Activated naive CD4-positive, alpha-beta T cell treated with anti-CD3 and anti-CD28 coated beads, Interleukin-2, amount 10 ng/mL, durations not matched to agents 7 days and 5 days (primary cell): ENCODE measurements at regions of chr1 and their contacts with region 1.

Region 1: GRCh38 chr1:35715568-35716002 is 3.1 kb downstream of the C1orf216 start:
- DNase-seq: peak; percentile 87
- H3K4me3 Mint-ChIP-seq: no peak overlapping the region
- H3K27ac Mint-ChIP-seq: no peak overlapping the region
- H3K4me1 Mint-ChIP-seq: peaks cover 31% of the 10 kb centered on the region
- H3K27me3 Mint-ChIP-seq: peaks cover 3% of the 10 kb centered on the region

Region 2: DNA sequence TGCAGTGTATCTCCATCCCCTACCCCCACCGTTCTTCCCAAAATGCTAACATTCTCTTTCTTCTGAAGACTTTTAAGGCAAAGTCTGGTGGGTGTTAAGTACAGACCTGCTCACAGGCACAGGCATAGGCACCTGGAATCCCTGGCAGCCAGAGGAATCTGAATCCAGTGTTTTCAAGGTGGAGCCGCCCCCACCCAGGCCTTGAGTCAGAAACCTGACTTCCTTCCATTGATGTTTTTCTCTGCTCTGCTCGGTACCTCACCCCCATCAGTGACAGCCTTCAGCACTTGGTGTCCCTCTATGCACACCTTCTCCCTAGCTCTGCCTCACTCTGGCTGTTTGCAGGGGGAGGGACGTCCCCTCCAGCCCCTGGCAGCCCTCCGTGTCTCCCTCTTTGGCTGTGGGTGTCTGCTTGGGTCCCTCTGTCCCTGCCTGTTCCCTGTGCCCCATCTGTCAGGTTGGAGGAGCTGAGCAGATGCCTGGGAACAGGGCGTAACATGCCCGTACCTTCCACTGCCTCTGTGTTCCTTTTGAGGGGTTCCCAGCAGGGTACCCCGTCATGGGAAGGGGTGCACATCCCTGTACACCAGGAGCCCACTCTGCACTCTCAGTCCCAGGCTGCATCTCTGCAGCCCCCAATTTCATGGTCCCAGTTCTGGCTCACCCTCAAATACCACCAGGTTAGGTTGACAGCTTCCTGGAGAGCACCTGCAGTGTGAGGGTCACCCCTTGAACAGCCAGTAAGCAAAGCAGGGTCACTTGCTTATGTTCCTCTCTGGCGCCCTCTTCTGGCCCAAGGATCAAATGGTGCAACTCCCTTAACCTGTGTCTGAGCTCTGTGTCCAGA is 151.3 kb before region 1 on chr1:
- CTCF ChIA-PET with region 1: interaction called, 78 read pairs
- DNase-seq: peak; percentile 91
- H3K4me3 Mint-ChIP-seq: no peak overlapping the region
- H3K27ac Mint-ChIP-seq: no peak overlapping the region
- H3K4me1 Mint-ChIP-seq: peaks cover 16% of the 10 kb centered on the region
- H3K27me3 Mint-ChIP-seq: no peaks in the 10 kb centered on the region

Region 3: DNA sequence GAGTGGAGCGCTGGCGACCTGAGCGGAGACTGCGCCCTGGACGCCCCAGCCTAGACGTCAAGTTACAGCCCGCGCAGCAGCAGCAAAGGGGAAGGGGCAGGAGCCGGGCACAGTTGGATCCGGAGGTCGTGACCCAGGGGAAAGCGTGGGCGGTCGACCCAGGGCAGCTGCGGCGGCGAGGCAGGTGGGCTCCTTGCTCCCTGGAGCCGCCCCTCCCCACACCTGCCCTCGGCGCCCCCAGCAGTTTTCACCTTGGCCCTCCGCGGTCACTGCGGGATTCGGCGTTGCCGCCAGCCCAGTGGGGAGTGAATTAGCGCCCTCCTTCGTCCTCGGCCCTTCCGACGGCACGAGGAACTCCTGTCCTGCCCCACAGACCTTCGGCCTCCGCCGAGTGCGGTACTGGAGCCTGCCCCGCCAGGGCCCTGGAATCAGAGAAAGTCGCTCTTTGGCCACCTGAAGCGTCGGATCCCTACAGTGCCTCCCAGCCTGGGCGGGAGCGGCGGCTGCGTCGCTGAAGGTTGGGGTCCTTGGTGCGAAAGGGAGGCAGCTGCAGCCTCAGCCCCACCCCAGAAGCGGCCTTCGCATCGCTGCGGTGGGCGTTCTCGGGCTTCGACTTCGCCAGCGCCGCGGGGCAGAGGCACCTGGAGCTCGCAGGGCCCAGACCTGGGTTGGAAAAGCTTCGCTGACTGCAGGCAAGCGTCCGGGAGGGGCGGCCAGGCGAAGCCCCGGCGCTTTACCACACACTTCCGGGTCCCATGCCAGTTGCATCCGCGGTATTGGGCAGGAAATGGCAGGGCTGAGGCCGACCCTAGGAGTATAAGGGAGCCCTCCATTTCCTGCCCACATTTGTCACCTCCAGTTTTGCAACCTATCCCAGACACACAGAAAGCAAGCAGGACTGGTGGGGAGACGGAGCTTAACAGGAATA is 138.2 kb before region 1 on chr1:
- CTCF ChIA-PET with region 1: interaction called, 40 read pairs
- DNase-seq: peak; percentile 84
- H3K4me3 Mint-ChIP-seq: peak overlapping the region; percentile 68
- H3K27ac Mint-ChIP-seq: peak overlapping the region; percentile 62
- H3K4me1 Mint-ChIP-seq: peaks cover 28% of the 10 kb centered on the region
- H3K27me3 Mint-ChIP-seq: peaks cover 63% of the 10 kb centered on the region

Region 4: DNA sequence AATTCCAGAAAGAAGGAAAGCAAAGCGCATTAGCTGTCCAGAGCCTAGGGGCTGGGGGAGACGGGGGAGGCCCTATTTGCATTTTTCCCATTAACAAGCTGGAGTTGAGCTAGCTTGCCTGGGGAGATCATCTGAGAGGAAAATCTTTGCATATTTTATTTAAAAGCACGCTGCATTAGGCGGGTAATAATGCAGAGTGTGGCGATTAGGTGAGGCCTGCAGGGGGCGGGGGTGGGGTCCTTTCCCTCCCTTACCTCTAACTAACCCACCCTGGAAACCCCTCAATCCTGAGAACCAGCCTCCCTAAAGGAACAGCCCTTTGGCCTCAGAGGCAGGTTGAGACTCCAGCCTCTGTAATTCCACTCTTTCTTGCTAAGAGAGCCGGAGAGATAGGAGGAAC is 13.1 kb before region 1 on chr1:
- CTCF ChIA-PET with region 1: interaction called, 33 read pairs
- DNase-seq: no peak
- H3K4me3 Mint-ChIP-seq: no peak overlapping the region
- H3K27ac Mint-ChIP-seq: no peak overlapping the region
- H3K4me1 Mint-ChIP-seq: peaks cover 8% of the 10 kb centered on the region
- H3K27me3 Mint-ChIP-seq: peaks cover 87% of the 10 kb centered on the region

Region 5: GRCh38 chr1:35762141-35762540 is 46.6 kb after region 1 on chr1:
- CTCF ChIA-PET with region 1: no interaction called
- DNase-seq: no peak
- H3K4me3 Mint-ChIP-seq: no peak overlapping the region
- H3K27ac Mint-ChIP-seq: no peak overlapping the region
- H3K4me1 Mint-ChIP-seq: peaks cover 30% of the 10 kb centered on the region
- H3K27me3 Mint-ChIP-seq: no peaks in the 10 kb centered on the region

Region 6: GRCh38 chr1:35795295-35795694 is 79.7 kb after region 1 on chr1:
- CTCF ChIA-PET with region 1: no interaction called
- DNase-seq: no peak
- H3K4me3 Mint-ChIP-seq: no peak overlapping the region
- H3K27ac Mint-ChIP-seq: no peak overlapping the region
- H3K4me1 Mint-ChIP-seq: peaks cover 2% of the 10 kb centered on the region
- H3K27me3 Mint-ChIP-seq: peaks cover 4% of the 10 kb centered on the region

Region 7: GRCh38 chr1:35807614-35808449 is 92.2 kb after region 1 on chr1 and contains the start of gene AGO4:
- CTCF ChIA-PET with region 1: no interaction called
- DNase-seq: peak; percentile 52
- H3K4me3 Mint-ChIP-seq: peak within 1 kb of the TSS; percentile 84
- H3K27ac Mint-ChIP-seq: peak within 1 kb of the TSS; percentile 77
- H3K4me1 Mint-ChIP-seq: peaks cover 49% of the 10 kb centered on the region
- H3K27me3 Mint-ChIP-seq: peaks cover 10% of the 10 kb centered on the region

Region 8: GRCh38 chr1:35857830-35858229 is 142.2 kb after region 1 on chr1:
- CTCF ChIA-PET with region 1: no interaction called
- DNase-seq: no peak
- H3K4me3 Mint-ChIP-seq: no peak overlapping the region
- H3K27ac Mint-ChIP-seq: no peak overlapping the region
- H3K4me1 Mint-ChIP-seq: no peaks in the 10 kb centered on the region
- H3K27me3 Mint-ChIP-seq: peaks cover 4% of the 10 kb centered on the region